Ovary (tissue), 10 donors: ENCODE measurements at regions of chr12 and their contacts with region 1.

Region 1: GRCh38 chr12:19263672-19264071 is 134.1 kb downstream of the PLEKHA5 start:
- DNase-seq: no peak
- H3K4me3 ChIP-seq: no peak overlapping the region
- H3K27ac ChIP-seq: no peak overlapping the region
- H3K4me1 ChIP-seq: peaks cover 1% of the 10 kb centered on the region
- H3K27me3 ChIP-seq: no peaks in the 10 kb centered on the region
- CTCF ChIP-seq: no peak
- EP300 ChIP-seq: no peak
- POLR2A ChIP-seq: no peak

Region 2: DNA sequence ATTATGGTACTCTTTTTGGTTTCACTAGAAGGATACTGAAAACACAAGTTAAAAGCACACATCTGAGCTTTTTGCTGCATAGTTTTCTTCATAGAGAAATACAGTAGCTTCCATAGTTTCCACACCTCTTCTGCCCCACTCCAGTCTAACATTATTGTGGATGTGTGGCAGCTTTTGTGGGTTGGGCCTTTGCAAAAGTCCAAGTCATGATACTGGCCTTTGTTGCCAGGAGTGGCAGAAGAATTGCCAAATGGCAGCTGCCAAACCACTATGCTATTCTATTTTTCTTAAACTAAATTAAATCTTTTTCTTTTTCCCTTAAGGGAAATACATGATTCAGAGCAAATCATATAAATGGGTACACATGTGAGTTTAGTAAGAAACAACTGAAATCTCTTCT is 19.4 kb before region 1 on chr12:
- intact Hi-C with region 1: loop called in 1 of 4 experiments (anchors 2 kb)
- DNase-seq: no peak
- H3K4me3 ChIP-seq: no peak overlapping the region
- H3K27ac ChIP-seq: no peak overlapping the region
- H3K4me1 ChIP-seq: peaks cover 5% of the 10 kb centered on the region
- H3K27me3 ChIP-seq: no peaks in the 10 kb centered on the region
- CTCF ChIP-seq: no peak
- EP300 ChIP-seq: no peak
- POLR2A ChIP-seq: no peak